PC-9 (cell line): ENCODE measurements at regions of chr2 and their contacts with region 1.

Region 1: DNA sequence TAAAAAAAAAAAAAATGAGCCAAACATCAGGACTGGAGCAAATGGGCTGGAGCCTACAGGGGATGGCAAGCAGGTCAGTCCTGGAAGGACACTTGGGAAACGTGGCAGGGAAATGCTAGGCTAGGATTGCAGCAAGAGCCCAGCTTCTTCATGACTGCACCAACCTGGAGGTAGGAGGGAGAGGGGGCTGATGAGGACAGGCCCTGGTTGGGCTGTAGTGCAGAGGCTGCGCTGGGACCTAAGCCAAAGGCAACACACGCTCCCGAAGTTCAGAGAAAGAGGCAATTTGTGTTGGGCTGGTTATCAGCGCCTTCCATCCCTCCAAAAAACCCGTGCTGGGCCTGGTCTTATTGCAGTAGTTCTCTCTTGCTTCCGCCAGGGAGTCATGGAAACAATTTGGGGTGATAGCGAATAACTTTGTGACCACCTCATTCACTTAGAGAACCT is 82.3 kb upstream of the STPG4 start:
- DNase-seq: no peak
- H3K4me3 ChIP-seq: no peak overlapping the region
- H3K27ac ChIP-seq: no peak overlapping the region
- H3K4me1 ChIP-seq: peaks cover 22% of the 10 kb centered on the region
- H3K27me3 ChIP-seq: no peaks in the 10 kb centered on the region
- CTCF ChIP-seq: no peak

Region 2: DNA sequence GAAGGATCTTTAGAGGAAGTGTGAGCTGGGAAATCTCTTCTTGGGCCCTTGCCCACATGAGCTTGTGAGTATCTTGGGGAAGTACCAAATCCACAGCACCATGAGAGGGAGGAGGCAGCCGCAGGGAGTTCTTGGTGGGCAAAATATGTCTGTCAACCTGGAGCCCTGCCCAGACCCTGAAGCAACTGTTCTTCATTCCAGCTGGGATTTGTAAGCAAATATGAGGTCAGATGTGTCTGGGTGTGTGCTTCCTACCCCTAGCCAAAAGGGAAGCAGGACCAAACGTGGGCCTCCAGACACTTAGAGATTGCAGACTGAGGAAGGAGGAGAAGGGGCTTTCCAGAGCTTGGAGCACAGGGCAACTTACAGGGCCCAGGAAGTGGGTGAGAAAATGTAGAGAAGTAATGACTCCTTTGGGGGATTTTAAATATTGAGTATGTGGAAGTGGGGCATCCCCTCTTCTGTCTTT is 716.1 kb before region 1 on chr2:
- CTCF ChIA-PET with region 1: no interaction called
- POLR2A ChIA-PET with region 1: no interaction called
- intact Hi-C with region 1: no loop called
- DNase-seq: no peak
- H3K4me3 ChIP-seq: no peak overlapping the region
- H3K27ac ChIP-seq: no peak overlapping the region
- H3K4me1 ChIP-seq: no peaks in the 10 kb centered on the region
- H3K27me3 ChIP-seq: no peaks in the 10 kb centered on the region
- CTCF ChIP-seq: no peak

Region 3: GRCh38 chr2:47198985-47199451 is 38.4 kb before region 1 on chr2:
- CTCF ChIA-PET with region 1: no interaction called
- POLR2A ChIA-PET with region 1: interaction called, 11 read pairs
- intact Hi-C with region 1: no loop called
- DNase-seq: peak; percentile 85 to 99
- H3K4me3 ChIP-seq: no peak overlapping the region
- H3K27ac ChIP-seq: peak overlapping the region; percentile 69
- H3K4me1 ChIP-seq: peaks cover 81% of the 10 kb centered on the region
- H3K27me3 ChIP-seq: no peaks in the 10 kb centered on the region
- CTCF ChIP-seq: no peak

Region 4: DNA sequence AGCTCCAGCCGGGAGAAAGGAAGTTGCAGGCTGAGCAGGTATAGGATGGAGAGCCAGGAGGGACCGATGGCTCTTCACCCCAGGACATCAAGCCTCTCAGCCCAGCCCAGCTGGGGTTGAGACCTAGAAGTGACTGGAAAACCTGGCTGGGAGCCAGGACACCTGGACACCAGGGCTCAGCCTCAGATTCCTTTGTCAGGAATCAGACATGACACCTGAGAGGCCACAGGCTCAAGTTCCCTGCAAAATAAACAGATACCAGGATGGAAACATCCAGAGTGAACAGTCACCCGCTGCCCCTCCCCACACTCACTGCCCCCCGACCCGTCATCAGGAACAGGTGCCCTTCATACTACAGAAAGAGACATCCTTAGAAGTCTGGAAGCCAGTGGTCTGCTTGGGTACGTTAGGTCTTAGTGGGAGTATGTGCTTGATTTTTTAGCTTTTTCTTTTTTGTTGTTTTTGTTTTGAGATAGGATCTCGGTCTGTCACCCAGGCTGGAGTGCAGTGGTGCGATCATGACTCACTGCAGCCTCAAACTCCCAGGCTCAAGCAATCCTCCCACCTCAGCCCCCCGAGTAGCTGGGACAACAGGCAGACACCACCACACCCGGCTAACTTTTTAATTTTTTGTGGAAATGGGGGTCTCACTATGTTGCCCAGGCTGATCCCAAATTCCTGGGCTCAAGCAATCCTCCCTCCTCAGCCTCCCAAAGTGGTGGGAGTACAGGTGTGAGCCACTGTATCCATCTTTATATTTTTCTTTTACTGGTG is 13.4 kb after region 1 on chr2:
- CTCF ChIA-PET with region 1: no interaction called
- POLR2A ChIA-PET with region 1: no interaction called
- intact Hi-C with region 1: no loop called
- DNase-seq: peak; percentile 95 to 99
- H3K4me3 ChIP-seq: peak overlapping the region; percentile 32; the same call in 1 of the 2 replicates
- H3K27ac ChIP-seq: peak overlapping the region; percentile 86
- H3K4me1 ChIP-seq: peaks cover 39% of the 10 kb centered on the region
- H3K27me3 ChIP-seq: no peaks in the 10 kb centered on the region
- CTCF ChIP-seq: no peak

Region 5: GRCh38 chr2:47272031-47272864 is 34.9 kb after region 1 on chr2:
- CTCF ChIA-PET with region 1: no interaction called
- POLR2A ChIA-PET with region 1: no interaction called
- intact Hi-C with region 1: no loop called
- DNase-seq: peak; percentile 79 to 92
- H3K4me3 ChIP-seq: peak overlapping the region; percentile 56; the same call in 1 of the 2 replicates
- H3K27ac ChIP-seq: peak overlapping the region; percentile 99
- H3K4me1 ChIP-seq: peaks cover 62% of the 10 kb centered on the region
- H3K27me3 ChIP-seq: no peaks in the 10 kb centered on the region
- CTCF ChIP-seq: peak; percentile 100